ENCODE measurements at regions of chr21 and their contacts with region 1.

Region 1: GRCh38 chr21:16117851-16118592 is 388.2 kb downstream of the USP25 start:
- DNase-seq: peak; percentile 93
- H3K4me3 ChIP-seq: peak overlapping the region in 1 of 3 experiments; percentile 45
- H3K27ac ChIP-seq: peak overlapping the region; percentile 97
- H3K4me1 ChIP-seq: peaks cover 34% of the 10 kb centered on the region
- H3K27me3 ChIP-seq: no peaks in the 10 kb centered on the region
- CTCF ChIP-seq: no peak
- POLR2A ChIP-seq: peak; percentile 48

Region 2: DNA sequence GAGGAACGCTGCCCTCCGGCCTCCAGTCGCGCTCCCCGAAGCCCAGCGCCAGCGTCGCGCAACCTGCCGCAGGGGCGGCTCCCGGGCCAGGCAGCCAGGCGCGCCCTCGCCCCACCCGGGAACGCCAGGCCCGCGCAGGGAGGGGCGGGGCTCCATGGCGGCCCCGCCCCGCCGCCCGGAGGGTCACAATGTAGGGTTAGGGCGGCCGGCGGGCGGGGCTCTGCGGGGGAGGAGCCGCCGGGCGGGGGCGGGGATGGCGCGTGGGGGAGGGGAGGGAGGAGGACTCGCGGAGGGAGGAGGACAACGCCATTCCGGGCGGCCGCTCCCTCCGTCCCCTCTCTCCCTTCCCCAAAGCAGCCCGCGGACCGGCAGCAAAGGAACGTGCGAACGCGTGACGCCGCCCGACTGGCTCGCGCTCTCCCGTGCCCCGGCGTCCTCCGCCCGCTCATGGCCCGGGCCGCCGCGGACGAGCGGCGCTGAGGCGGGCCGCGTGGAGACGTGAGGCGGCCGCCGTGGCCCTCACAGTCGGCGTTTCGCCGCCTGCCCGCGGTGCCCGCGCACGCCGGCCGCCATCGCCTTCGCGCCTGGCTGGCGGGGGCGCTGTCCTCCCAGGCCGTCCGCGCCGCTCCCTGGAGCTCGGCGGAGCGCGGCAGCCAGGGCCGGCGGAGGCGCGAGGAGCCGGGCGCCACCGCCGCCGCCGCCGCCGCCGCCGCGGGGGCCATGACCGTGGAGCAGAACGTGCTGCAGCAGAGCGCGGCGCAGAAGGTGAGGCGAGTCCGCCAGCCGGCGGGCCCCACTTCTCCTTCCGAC is 388.1 kb before region 1 on chr21 and contains the start of gene USP25:
- CTCF ChIA-PET with region 1: no interaction called
- POLR2A ChIA-PET with region 1: no interaction called
- dilution Hi-C with region 1: no loop called
- intact Hi-C with region 1: loop called (anchors 1 kb)
- DNase-seq: peak; percentile 75
- H3K4me3 ChIP-seq: peak within 1 kb of the TSS; percentile 92 to 99 (median 95)
- H3K27ac ChIP-seq: peak within 1 kb of the TSS; percentile 82
- H3K4me1 ChIP-seq: peaks cover 19% of the 10 kb centered on the region
- H3K27me3 ChIP-seq: no peaks in the 10 kb centered on the region
- CTCF ChIP-seq: no peak
- POLR2A ChIP-seq: peak; percentile 82
- total RNA-seq, gene USP25: 66.9 and 67.5 TPM in 2 replicates

Region 3: DNA sequence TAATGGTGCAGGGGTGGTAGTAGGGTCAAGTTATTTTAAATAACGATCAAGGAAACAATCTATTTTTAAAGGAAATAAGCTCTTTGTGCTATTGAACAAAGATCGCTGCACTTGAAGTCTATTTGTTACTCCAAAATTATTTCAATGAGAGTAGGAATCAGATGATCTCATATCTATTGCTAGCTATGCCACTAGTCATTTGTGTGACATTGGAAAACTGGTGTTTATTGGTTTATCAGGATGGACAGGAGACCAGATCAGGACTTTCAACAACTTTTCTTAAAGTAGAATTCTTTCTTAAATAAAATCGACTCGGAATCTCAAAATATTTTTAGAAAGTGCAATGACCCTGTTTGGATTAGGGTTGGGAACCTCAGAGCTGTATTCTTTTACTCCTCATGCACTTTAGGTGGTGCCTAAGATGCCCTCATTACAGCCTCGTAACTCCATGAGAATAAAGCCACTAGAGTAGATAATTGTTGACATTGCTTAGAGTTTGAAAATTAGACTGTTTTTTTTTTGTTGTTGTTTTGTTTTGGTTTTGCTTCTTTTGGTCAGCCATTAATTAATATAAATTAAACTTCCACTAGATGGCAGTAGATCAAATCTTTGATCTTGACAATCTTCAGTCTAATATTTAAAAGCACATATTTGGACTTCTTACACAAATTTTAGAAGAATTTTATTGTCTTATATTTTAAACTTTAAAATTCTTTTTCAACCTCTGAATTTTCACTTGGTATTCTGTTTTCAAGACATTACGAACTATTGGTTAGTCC is 35.8 kb before region 1 on chr21:
- CTCF ChIA-PET with region 1: interaction called, 30 read pairs
- POLR2A ChIA-PET with region 1: no interaction called
- dilution Hi-C with region 1: no loop called
- intact Hi-C with region 1: loop called (anchors 2 kb)
- DNase-seq: peak; percentile 78
- H3K4me3 ChIP-seq: no peak overlapping the region
- H3K27ac ChIP-seq: peak overlapping the region; percentile 48
- H3K4me1 ChIP-seq: peaks cover 8% of the 10 kb centered on the region
- H3K27me3 ChIP-seq: no peaks in the 10 kb centered on the region
- CTCF ChIP-seq: peak in 1 of 2 donors; percentile 4
- POLR2A ChIP-seq: no peak

Region 4: DNA sequence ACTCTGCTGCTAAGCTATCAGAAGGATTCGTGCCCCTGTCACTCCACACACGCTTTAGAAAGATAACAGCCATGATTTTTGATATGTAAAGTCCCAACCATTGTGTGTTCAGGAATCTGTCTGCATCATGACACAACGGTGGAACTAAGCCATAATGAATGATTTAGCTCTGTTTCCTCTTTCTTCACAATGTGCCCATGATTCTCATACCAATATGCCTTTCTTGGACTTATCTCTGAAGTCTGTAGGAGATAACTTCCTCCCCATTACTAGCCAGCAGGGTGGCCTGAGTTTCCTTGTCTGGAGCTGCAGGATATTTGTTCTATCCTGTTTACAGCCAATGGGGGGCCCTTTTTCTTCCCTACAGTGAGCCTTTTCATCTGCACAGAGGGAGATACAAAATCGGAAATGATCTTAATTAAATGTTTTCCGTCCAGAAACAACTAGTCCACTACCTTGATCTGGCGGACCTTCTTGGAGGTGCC is 123.5 kb after region 1 on chr21:
- CTCF ChIA-PET with region 1: interaction called, 3 read pairs
- POLR2A ChIA-PET with region 1: no interaction called
- dilution Hi-C with region 1: no loop called
- intact Hi-C with region 1: loop called (anchors 1 kb)
- DNase-seq: peak; percentile 98
- H3K4me3 ChIP-seq: peak overlapping the region in 1 of 3 experiments; percentile 38
- H3K27ac ChIP-seq: peak overlapping the region; percentile 73
- H3K4me1 ChIP-seq: peaks cover 22% of the 10 kb centered on the region
- H3K27me3 ChIP-seq: no peaks in the 10 kb centered on the region
- CTCF ChIP-seq: no peak
- POLR2A ChIP-seq: peak; percentile 44

Region 5: DNA sequence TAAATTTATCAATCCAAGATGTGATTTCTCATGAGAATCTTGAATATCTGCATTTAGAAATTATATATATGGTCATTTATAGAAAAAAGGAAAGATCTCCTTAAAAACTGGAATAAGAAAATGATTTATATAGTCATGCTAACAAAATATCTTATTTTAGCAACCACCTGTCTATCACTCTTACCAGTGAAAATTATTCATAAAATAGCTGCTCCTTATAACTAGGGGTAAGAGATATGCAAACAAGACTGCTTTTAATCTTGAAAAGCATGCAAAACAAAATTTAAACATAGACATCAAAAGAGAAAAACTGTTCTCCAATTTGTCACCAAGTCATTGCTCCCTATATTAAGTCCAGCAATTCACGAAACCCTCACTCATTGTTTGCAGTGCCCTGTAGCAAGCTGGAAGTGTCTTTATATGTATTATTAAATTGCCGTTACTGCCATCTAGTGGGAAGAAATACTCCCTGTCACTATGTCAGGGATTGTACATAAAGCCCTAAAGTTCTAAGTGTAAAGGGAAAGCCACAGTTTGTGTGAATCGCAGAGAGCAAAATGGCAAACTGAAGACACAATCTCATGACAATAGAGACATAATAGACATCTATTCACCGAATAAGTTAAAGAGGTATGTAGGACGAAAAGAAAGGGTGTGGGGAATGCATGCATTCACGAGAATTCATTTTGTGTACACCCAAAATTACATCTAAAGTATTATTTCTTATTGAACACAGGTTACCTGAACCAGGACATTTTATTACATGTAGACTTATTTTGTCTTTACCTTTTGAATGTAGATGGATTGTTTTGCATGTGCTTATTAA is 212.3 kb after region 1 on chr21:
- CTCF ChIA-PET with region 1: interaction called, 16 read pairs
- POLR2A ChIA-PET with region 1: no interaction called
- dilution Hi-C with region 1: no loop called
- intact Hi-C with region 1: no loop called
- DNase-seq: peak; percentile 87
- H3K4me3 ChIP-seq: no peak overlapping the region
- H3K27ac ChIP-seq: no peak overlapping the region
- H3K4me1 ChIP-seq: no peaks in the 10 kb centered on the region
- H3K27me3 ChIP-seq: no peaks in the 10 kb centered on the region
- CTCF ChIP-seq: peak; percentile 51 to 56
- POLR2A ChIP-seq: no peak

Region 6: GRCh38 chr21:16426936-16427335 is 308.9 kb after region 1 on chr21:
- CTCF ChIA-PET with region 1: interaction called, 3 read pairs
- POLR2A ChIA-PET with region 1: interaction called, 6 read pairs
- dilution Hi-C with region 1: no loop called
- intact Hi-C with region 1: loop called (anchors 1 kb)
- DNase-seq: peak; percentile 65
- H3K4me3 ChIP-seq: peak overlapping the region in 1 of 3 experiments; percentile 21
- H3K27ac ChIP-seq: peak overlapping the region; percentile 85
- H3K4me1 ChIP-seq: peaks cover 52% of the 10 kb centered on the region
- H3K27me3 ChIP-seq: no peaks in the 10 kb centered on the region
- CTCF ChIP-seq: no peak
- POLR2A ChIP-seq: no peak